Dendritic cell treated with granulocyte-macrophage colony-stimulating factor and Interleukin-4, amounts not matched to agents 40 ng/mL and 50 ng/mL, for 4 days (primary cell): ENCODE measurements at regions of chr3 and their contacts with region 1.

Region 1: DNA sequence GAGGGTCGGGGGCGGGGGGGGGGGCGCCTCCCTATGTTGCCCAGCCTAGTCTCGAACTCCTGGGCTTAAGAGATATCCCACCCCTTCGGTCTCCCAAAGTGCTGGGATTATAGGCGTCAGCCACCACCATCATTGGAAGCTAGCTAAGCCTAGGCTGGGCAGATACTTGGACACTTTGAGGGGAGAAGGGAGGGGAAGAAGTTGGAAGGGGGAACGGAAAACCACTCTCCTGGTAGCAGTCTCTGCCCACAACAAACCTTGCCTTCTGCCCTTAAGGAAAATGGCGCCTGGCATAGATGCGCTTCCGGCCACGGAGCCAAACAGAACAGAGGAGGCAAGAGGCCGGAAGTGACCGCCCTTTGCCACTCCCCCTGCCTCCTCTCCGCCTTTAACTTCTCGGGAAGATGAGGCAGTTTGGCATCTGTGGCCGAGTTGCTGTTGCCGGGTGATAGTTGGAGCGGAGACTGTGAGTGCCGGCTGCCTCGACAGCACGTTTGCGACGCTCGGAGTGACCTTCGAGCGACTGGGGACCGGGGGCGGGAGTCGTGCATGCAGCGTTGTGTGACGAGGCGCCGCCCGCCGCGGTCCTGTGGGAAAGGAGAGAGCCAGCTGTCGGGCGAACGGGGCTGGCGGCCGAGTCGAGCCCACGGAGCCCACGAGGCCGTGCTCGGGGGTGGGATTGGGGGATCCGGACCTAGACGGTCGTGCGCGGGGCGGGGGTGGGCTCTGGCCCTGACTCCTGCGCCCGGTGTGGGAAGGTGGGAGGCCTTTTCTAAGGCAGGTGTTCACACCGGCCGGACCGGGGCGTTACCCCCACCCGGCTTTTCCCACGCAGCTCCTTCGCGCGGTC is at the start of gene MFN1:
- H3K4me3 Mint-ChIP-seq: peak within 1 kb of the TSS; percentile 98
- H3K27ac Mint-ChIP-seq: peak within 1 kb of the TSS; percentile 94
- H3K4me1 Mint-ChIP-seq: peaks cover 16% of the 10 kb centered on the region
- H3K27me3 Mint-ChIP-seq: peaks cover 2% of the 10 kb centered on the region

Region 2: GRCh38 chr3:179260949-179261765 is 86.4 kb before region 1 on chr3:
- intact Hi-C with region 1: no loop called
- H3K4me3 Mint-ChIP-seq: peak overlapping the region; percentile 80
- H3K27ac Mint-ChIP-seq: peak overlapping the region; percentile 74
- H3K4me1 Mint-ChIP-seq: peaks cover 18% of the 10 kb centered on the region
- H3K27me3 Mint-ChIP-seq: peaks cover 8% of the 10 kb centered on the region

Region 3: DNA sequence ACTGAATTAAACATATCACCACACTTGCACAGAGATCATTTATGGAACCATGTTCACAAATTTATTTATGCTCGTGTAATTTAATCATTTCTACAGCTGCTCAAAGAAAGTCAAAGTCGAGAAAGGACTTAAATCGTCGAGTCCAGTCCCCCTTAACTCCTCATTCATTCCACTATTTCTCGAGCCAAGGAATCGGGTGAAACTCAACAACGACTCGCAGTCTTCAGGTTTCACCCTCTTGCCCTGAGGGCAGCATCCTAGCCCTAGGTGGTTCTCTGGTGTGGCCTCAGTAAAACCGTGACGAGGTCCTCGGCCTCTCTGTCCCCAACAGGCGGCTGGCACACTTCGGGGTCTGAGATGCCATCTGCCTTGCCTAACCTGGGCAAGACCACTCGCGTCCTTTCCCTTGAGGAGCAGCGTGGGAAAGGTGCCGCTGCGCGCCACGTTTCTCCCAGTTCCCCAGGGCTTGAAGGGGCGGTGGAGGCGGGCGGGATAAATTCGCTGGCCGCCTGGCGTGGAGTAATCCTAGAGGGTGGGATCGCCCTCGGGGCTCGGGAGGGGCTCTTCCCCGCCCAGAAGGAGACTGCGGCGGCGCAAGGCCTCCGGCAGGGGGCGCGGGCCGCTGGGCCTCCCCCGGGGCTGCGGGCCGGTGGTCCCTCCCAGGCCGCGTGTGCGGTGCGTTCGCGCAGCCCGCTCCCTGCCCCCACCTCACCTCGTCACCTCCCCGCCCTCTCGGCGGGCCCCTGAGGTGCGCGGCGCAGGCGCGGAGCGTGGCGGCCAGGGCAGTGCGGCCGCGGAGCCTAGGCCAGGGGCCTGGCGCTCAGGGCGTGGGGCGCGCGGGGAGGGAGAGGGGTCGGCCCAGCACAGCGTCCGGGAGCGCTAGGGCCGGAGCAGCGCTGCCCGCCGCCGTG is 25.0 kb before region 1 on chr3 and contains the start of gene ZNF639:
- intact Hi-C with region 1: loop called (anchors 1 kb)
- H3K4me3 Mint-ChIP-seq: peak within 1 kb of the TSS; percentile 83
- H3K27ac Mint-ChIP-seq: peak within 1 kb of the TSS; percentile 89
- H3K4me1 Mint-ChIP-seq: peaks cover 31% of the 10 kb centered on the region
- H3K27me3 Mint-ChIP-seq: no peaks in the 10 kb centered on the region

Region 4: GRCh38 chr3:179451265-179452175 is 104.0 kb after region 1 on chr3 and contains the start of gene GNB4:
- intact Hi-C with region 1: loop called (anchors 1 kb)
- H3K4me3 Mint-ChIP-seq: peak within 1 kb of the TSS; percentile 83
- H3K27ac Mint-ChIP-seq: peak within 1 kb of the TSS; percentile 89
- H3K4me1 Mint-ChIP-seq: peaks cover 53% of the 10 kb centered on the region
- H3K27me3 Mint-ChIP-seq: no peaks in the 10 kb centered on the region

Region 5: GRCh38 chr3:179604321-179605078 is 256.9 kb after region 1 on chr3 and contains the starts of genes MRPL47 and NDUFB5:
- intact Hi-C with region 1: loop called (anchors 1 kb)
- H3K4me3 Mint-ChIP-seq: peak within 1 kb of the TSS; percentile 100
- H3K27ac Mint-ChIP-seq: peak within 1 kb of the TSS; percentile 100
- H3K4me1 Mint-ChIP-seq: peaks cover 31% of the 10 kb centered on the region
- H3K27me3 Mint-ChIP-seq: no peaks in the 10 kb centered on the region

Region 6: GRCh38 chr3:180601688-180602666 is 1254.4 kb after region 1 on chr3 and contains the start of gene TTC14:
- intact Hi-C with region 1: loop called (anchors 10 kb)
- H3K4me3 Mint-ChIP-seq: peak within 1 kb of the TSS; percentile 85
- H3K27ac Mint-ChIP-seq: peak within 1 kb of the TSS; percentile 92
- H3K4me1 Mint-ChIP-seq: peaks cover 12% of the 10 kb centered on the region
- H3K27me3 Mint-ChIP-seq: peaks cover 24% of the 10 kb centered on the region